Tibial artery (tissue), 4 donors: ENCODE measurements at regions of chr11 and their contacts with region 1.

Region 1: DNA sequence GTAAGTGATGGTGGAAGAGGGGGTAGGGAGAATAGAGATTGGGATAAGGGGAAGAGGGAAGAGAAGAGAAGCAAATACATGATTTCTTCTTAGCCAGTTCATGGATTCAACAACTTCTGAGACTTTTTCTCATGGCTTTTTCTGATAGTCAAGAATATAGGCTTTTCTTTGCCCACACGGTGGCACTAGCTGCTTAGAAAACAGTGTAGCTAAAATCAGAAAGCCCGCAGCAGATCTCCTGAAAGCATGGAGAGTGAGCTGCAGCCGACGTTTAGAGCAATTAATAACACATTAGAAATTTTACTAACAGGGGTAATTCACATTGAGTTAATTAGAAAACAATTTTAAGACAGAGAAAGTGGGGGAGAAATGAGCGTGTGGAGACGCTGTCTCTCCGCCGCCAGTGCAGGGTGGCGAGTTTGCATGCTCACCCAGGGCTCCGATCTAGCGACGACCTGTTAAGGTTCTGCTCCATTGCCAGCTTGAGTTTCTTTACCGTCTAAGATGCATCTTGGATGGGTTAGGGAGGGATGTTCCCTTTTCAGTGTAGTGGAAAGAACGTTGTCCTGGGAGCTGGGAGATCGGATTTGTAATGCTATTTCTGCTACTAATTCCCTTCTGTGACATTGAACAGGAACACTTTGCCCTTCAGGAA is 3.3 kb upstream of the RAG1 start:
- DNase-seq: peak in 1 of 2 donors; percentile 43
- H3K4me3 ChIP-seq: peak overlapping the region; percentile 25 to 46
- H3K27ac ChIP-seq: no peak overlapping the region
- H3K4me1 ChIP-seq: peaks cover 0 to 7% (median 2%) of the 10 kb centered on the region in 4 donors
- H3K27me3 ChIP-seq: no peaks in the 10 kb centered on the region
- CTCF ChIP-seq: peak; percentile 64 to 77

Region 2: DNA sequence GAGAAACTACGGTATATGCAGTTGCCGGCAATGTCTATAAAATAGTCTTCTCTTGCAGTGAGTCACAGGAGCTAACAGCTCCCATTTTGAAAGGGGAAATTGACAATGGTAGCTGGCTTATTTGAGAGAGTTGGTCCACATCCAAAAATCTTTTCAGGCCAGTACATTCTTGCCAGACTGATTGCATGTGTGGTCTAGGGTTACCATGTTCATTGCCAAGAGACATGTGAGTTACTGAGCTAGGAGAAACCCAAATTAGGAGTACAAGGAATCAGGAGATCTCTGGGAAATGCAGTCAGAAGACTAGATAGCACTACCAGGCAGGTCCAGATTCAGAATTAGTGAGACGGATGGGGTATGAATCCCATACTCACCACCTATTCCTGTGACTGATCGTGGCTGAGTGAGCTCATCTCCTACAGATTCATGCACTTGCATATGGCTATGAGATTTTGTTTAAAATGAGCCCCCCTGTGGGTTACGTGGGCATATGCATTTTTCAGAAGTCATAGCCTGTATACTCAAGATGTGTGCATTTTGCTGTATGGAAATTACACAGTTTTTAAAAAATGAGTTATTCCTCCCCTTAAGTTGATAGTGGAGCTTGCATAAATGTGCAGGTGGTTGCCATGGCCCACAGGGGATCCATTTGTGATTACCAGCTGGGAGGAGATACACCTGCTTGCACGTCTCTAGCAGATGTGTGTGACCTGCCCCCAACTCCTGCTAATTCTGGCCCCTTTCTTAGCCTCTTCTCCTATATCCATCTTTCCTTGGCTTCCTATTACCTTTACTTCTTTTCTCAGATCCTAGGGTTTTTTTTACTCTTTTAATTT is 377.9 kb before region 1 on chr11:
- intact Hi-C with region 1: no loop called
- DNase-seq: no peak
- H3K4me3 ChIP-seq: no peak overlapping the region
- H3K27ac ChIP-seq: no peak overlapping the region
- H3K4me1 ChIP-seq: no peaks in the 10 kb centered on the region
- H3K27me3 ChIP-seq: no peaks in the 10 kb centered on the region
- CTCF ChIP-seq: no peak

Region 3: DNA sequence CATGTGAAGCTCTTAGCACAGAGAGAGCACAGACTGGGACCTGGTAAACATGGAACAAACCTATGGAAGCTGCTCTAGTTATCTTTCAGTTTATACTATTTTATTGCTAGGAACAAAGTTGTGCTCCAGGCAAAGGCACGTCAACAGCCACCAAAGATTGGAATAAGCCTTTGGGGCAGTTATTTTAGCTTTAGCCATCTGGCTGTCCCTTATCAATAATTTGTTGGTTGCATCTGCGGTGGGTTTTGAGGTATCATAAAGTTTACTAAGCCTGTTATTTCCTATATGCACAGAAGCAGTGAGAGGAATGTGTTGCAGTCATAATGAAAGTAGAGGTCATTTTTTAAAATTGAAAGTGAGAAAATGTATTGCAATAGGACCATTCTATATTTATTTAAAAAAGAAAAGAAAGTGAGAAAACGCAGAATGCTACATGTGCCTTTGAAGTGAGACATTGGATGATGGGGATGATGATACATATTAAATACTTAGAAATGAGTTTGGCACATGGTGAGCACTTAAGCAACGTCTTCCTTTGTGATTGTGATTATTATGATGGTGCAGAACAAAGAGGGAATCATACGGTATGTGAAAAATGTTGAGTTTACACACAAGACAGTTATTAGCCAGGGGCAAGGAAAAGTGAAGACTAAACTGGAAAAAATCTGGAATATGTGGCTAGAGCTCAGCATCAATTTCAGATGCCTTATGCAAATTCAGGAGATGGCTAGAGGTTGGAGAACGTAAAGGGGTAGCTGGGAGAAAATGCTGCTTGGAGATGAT is 210.1 kb before region 1 on chr11:
- intact Hi-C with region 1: no loop called
- DNase-seq: no peak
- H3K4me3 ChIP-seq: no peak overlapping the region
- H3K27ac ChIP-seq: no peak overlapping the region
- H3K4me1 ChIP-seq: no peaks in the 10 kb centered on the region
- H3K27me3 ChIP-seq: no peaks in the 10 kb centered on the region
- CTCF ChIP-seq: no peak

Region 4: GRCh38 chr11:36605221-36606216 is 41.0 kb after region 1 on chr11:
- intact Hi-C with region 1: loop called (anchors 5 kb)
- DNase-seq: no peak
- H3K4me3 ChIP-seq: no peak overlapping the region
- H3K27ac ChIP-seq: no peak overlapping the region
- H3K4me1 ChIP-seq: no peaks in the 10 kb centered on the region
- H3K27me3 ChIP-seq: no peaks in the 10 kb centered on the region
- CTCF ChIP-seq: no peak

Region 5: DNA sequence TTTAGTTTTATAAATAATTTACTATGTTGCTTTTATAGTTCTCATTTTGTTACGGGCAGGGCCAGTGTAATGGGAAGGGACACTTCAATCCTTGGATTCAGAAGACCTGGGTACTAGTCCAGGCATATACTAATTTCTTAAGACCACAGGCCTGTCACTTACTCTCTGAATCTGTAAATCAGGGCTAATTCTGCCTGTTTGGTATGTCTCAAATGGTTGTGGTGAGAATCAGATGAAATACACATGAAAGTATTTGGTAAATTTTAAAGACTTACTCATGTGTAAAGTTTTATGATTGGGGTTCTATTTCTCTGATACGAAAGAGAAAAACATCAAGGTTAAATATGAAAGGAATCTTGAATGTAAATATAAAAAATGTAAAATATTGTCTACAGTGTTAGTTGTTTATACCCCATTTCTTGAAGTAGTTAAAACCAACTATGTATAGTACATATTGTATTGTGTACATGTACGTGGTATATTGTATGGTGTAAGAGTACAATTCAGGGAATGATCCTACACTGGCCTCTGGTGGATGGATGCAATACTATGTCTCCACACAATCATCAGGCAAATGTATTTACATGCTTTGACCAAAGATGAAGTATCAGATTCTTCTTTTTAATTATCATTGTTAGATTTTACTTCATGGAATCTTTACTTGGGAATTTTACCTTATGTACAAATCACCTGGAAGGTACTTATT is 58.1 kb after region 1 on chr11:
- intact Hi-C with region 1: loop called (anchors 5 kb)
- DNase-seq: no peak
- H3K4me3 ChIP-seq: no peak overlapping the region
- H3K27ac ChIP-seq: no peak overlapping the region
- H3K4me1 ChIP-seq: peaks cover 0 to 25% (median 5%) of the 10 kb centered on the region in 4 donors
- H3K27me3 ChIP-seq: no peaks in the 10 kb centered on the region
- CTCF ChIP-seq: peak; percentile 47 to 58

Region 6: GRCh38 chr11:36635066-36635862 is 70.8 kb after region 1 on chr11:
- intact Hi-C with region 1: no loop called
- DNase-seq: no peak
- H3K4me3 ChIP-seq: no peak overlapping the region
- H3K27ac ChIP-seq: no peak overlapping the region
- H3K4me1 ChIP-seq: no peaks in the 10 kb centered on the region
- H3K27me3 ChIP-seq: no peaks in the 10 kb centered on the region
- CTCF ChIP-seq: no peak

Region 7: DNA sequence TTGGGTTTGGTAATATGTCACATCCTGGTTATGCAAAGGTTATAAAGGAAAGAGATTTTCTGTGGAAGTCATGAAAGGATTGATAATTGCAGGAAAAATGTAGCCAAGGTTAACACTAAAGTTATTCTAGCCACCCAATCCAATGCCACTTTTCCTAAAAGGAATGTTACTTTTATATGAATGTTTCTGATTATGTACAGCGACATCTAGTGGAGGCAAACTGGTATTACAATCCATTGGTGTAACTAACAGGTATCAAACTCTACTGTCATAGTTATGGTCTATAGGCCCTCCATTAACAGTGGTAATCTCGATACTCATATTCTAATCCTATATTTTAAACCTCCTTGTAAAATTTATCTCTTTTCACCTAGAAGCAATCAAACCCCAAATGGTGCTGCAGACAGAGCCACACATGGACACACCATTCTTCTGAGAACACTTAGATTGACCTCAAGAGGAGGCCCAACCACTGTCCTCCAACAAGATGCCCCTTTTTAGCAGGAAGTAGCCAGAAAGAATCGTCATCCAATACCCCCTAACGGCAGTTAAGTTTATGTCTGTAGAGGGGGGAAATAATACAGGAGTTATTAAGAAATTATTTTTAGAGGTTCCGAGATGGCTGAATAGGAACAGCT is 108.4 kb after region 1 on chr11:
- intact Hi-C with region 1: loop called (anchors 5 kb)
- DNase-seq: no peak
- H3K4me3 ChIP-seq: no peak overlapping the region
- H3K27ac ChIP-seq: no peak overlapping the region
- H3K4me1 ChIP-seq: no peaks in the 10 kb centered on the region
- H3K27me3 ChIP-seq: no peaks in the 10 kb centered on the region
- CTCF ChIP-seq: peak; percentile 75 to 80